Panc1 (cell line): ENCODE measurements at regions of chr2 and their contacts with region 1.

Region 1: GRCh38 chr2:235595422-235596010 is 101.7 kb downstream of the AGAP1 start:
- DNase-seq: peak; percentile 73
- ATAC-seq: peak; percentile 82
- H3K4me3 ChIP-seq: no peak overlapping the region
- H3K27ac ChIP-seq: no peak overlapping the region
- H3K4me1 ChIP-seq: no peaks in the 10 kb centered on the region
- H3K27me3 ChIP-seq: no peaks in the 10 kb centered on the region
- CTCF ChIP-seq: peak; percentile 89

Region 2: DNA sequence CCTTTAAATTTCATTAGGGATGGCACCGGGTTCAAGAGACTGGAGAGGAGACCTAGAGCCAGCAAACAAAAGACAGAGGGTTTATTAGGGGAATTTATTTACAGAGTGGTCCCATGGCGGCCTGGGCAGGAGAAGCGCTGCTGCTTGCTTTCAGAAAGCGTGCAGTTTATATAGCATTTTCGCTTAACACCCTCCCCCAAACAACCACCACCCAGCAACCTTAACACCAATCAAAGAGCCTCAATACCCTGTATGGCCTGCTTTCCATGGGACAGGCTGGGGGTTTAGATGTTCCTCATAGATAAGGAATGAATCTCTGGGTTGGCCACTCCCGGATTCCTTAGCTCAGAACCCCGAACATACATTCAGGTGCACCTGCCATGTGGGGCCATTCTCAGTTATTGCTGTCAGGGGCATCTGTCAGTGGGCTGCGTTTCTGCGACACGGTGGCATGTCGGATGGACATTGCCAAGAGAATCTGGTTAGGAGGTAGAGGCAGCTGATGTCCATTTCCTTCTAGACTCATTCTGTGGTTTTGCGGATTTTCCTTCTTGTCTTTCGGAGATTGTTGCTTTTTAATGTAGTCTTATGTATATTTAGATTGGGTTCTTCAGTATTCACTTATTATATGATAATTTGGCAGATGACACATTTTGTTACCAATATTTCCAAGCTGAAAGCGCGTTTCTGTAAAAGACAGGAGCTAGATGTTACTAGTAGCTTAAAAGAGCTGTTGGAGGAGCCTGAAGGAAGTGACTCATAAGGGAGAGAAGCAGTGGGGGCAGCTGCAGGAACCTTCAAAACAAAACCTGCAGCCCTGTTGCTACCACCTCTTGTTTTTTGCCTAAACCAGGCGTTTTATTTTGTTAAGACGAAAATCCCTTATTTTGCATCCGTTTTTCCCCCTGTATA is 94.5 kb before region 1 on chr2:
- CTCF ChIA-PET with region 1: interaction called, 5 read pairs
- POLR2A ChIA-PET with region 1: no interaction called
- in situ Hi-C with region 1: no loop called
- intact Hi-C with region 1: loop called (anchors 10 kb)
- DNase-seq: no peak
- ATAC-seq: peak; percentile 72
- H3K4me3 ChIP-seq: peak overlapping the region; percentile 15 to 46; a peak in 3 of 4 replicates
- H3K27ac ChIP-seq: peak overlapping the region; percentile 78
- H3K4me1 ChIP-seq: peaks cover 67% of the 10 kb centered on the region
- H3K27me3 ChIP-seq: no peaks in the 10 kb centered on the region
- CTCF ChIP-seq: no peak

Region 3: DNA sequence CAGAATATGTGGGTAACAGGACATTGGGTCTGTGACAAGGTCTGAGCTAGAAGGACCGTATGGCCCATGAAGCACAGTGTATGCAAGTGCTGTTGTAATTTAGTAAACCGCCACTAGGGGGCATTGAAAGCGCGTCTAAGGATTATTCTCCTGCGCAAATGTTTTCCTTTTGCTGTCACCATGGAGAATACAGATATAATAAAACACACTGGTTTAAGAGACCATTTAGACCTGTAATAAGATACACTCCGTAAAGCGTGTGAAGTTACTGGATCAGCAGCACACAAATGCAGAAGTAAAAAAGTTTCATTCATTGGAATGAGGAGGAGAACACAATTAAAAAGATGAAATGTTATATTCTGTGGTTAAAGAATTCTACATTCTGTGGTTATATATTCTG is 170.8 kb after region 1 on chr2:
- CTCF ChIA-PET with region 1: no interaction called
- POLR2A ChIA-PET with region 1: interaction called, 10 read pairs
- in situ Hi-C with region 1: no loop called
- intact Hi-C with region 1: no loop called
- DNase-seq: peak; percentile 51
- ATAC-seq: peak; percentile 92
- H3K4me3 ChIP-seq: no peak overlapping the region
- H3K27ac ChIP-seq: no peak overlapping the region
- H3K4me1 ChIP-seq: peaks cover 7% of the 10 kb centered on the region
- H3K27me3 ChIP-seq: no peaks in the 10 kb centered on the region
- CTCF ChIP-seq: peak; percentile 90